ENCODE measurements at regions of chr16 and their contacts with region 1.

Region 1: GRCh38 chr16:88743693-88744576 is 37.6 kb downstream of the CTU2 start:
- DNase-seq: peak; percentile 90
- ATAC-seq: peak; percentile 73

Region 2: DNA sequence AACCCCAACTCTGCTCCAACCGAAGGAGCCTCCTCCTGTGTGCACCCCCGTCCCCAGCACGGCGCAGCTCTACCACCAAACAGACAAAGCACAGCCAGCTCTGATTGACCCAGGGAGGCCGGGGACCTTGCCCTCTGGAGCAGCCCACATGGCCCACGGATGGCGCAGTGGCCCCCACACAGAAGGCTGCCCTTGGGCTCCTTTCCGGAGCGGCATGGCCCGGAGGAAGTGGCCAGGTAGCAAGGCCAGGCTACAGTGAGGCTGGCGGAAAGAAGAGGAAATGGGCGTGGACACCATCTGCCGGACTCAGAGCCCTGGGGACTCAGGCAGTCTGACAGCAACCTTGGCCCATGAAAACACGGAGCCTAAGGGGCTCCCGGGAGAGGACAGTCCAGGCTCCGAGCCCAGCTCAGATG is 193.7 kb before region 1 on chr16:
- intact Hi-C with region 1: no loop called
- DNase-seq: no peak
- ATAC-seq: peak; percentile 76

Region 3: GRCh38 chr16:88785106-88785924 is 41.4 kb after region 1 on chr16 and contains the start of gene PIEZO1:
- intact Hi-C with region 1: loop called (anchors 2 kb)
- DNase-seq: peak; percentile 87
- ATAC-seq: peak; percentile 29
- total RNA-seq, gene PIEZO1: 111 TPM

Region 4: GRCh38 chr16:89167425-89167941 is 423.5 kb after region 1 on chr16:
- intact Hi-C with region 1: loop called (anchors 10 kb)
- DNase-seq: peak; percentile 89
- ATAC-seq: peak; percentile 73